CD4-positive, alpha-beta memory T cell (primary cell): ENCODE measurements at regions of chr15 and their contacts with region 1.

Region 1: DNA sequence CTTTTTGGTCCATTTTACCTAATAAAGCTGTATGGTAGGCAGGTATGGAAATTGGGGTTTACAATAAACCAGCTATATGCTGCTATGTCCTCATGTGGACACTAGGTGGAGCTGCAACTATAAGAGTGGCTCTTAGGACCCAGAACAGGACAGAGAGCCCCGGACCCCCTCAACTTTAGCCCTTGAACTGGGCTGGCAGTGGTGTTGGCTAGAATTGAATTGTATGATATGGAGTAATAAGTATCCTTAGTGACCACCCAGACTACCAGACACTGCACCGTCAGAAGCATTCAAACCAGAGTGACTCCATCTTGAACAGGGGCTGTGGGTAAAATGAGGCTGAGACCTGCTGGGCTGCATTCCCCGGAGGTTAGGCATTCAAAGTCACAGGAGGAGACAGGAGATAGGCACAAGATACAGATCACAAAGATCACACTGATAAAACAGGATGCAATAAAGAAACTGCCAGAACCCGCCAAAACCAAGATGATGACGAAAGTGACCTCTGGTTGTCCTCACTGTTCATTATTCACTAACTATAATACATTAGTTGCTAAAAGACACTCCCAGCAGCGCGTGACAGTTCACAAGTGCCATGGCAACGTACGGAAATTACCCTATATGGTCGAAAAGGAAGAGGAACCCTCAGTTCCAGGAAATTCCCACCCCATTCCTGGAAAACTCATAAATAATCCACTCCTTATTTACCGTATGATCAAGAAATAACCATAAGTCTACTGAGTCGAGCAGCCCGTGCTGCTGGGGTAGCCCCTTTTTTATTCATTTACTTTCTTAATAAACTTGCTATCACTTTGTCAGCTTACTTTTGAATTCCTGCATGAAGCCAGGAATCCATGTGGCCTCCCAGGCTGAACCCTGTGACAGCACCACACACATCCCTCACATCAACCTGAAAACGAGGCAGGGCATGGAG is 68.7 kb upstream of the BLM start:
- DNase-seq: peak; percentile 59 to 75 (median 67)
- H3K4me3 ChIP-seq: no peak overlapping the region
- H3K4me3 Mint-ChIP-seq: peak overlapping the region in 7 of 8 donors; percentile 53 to 80 (median 73)
- H3K27ac ChIP-seq: no peak overlapping the region
- H3K27ac Mint-ChIP-seq: peak overlapping the region; percentile 28 to 83 (median 75)
- H3K4me1 ChIP-seq: peaks cover 20% of the 10 kb centered on the region
- H3K4me1 Mint-ChIP-seq: peaks cover 14 to 27% (median 21%) of the 10 kb centered on the region in 4 donors
- H3K27me3 ChIP-seq: no peaks in the 10 kb centered on the region
- H3K27me3 Mint-ChIP-seq: peaks cover 0 to 3% of the 10 kb centered on the region in 2 donors

Region 2: GRCh38 chr15:90529371-90530249 is 118.8 kb before region 1 on chr15 and contains the start of gene CRTC3:
- CTCF ChIA-PET with region 1: no interaction called
- POLR2A ChIA-PET with region 1: no interaction called
- intact Hi-C with region 1: no loop called
- DNase-seq: peak; percentile 61 to 73 (median 65)
- H3K4me3 ChIP-seq: peak within 1 kb of the TSS; percentile 77 to 84
- H3K4me3 Mint-ChIP-seq: peak within 1 kb of the TSS; percentile 92 to 98 (median 94)
- H3K27ac ChIP-seq: peak within 1 kb of the TSS; percentile 64
- H3K27ac Mint-ChIP-seq: peak within 1 kb of the TSS; percentile 90 to 95 (median 94)
- H3K4me1 ChIP-seq: peaks cover 40% of the 10 kb centered on the region
- H3K4me1 Mint-ChIP-seq: peaks cover 29 to 49% (median 42%) of the 10 kb centered on the region in 4 donors
- H3K27me3 ChIP-seq: no peaks in the 10 kb centered on the region
- H3K27me3 Mint-ChIP-seq: no peaks in the 10 kb centered on the region
- total RNA-seq, gene CRTC3: 72.2 to 75.5 TPM

Region 3: DNA sequence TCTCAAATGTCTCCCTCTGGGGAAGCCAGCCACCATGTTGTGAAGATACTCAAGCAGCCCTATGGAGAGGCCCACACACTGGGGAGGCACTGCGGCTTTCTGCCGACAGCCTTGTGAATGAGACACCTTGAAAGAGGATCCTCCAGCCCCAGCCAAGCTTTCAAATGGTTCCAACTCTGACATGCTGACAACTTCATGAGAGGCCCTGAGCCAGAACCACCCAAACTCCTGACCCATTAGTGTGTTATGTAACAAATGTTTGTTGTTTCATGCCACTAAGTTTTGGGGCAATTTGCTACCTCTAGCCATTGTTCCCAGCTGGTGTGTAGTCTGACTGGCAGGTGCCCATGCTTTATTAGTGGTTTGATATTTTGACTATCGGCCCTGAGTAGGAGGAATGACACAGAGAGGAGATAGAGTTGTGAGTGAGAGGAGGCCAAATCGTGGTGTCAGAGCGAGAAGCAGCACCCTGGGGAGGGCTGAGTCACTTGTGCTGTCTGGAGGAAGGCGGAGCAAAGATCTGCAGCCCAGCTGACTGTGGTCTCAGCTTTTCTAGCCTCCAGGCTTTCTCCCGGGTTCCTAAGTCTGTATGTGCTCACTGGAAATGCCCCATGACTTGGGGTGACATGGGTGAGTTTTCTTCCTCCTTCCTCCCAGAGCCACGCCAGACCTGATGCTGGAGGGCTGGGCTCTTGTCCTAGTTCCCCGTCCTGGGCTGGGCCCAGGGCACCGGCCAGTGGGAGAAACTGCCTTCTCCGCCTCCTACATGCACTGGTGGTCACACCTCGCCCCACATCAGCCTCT is 12.0 kb after region 1 on chr15:
- CTCF ChIA-PET with region 1: interaction called, 16 read pairs
- POLR2A ChIA-PET with region 1: no interaction called
- intact Hi-C with region 1: no loop called
- DNase-seq: peak; percentile 28 to 75 (median 32)
- H3K4me3 ChIP-seq: peak overlapping the region in 1 of 2 donors; percentile 33
- H3K4me3 Mint-ChIP-seq: peak overlapping the region; percentile 47 to 90 (median 79)
- H3K27ac ChIP-seq: no peak overlapping the region
- H3K27ac Mint-ChIP-seq: peak overlapping the region in 4 of 7 donors; percentile 16 to 84 (median 41)
- H3K4me1 ChIP-seq: peaks cover 61% of the 10 kb centered on the region
- H3K4me1 Mint-ChIP-seq: peaks cover 52 to 75% (median 62%) of the 10 kb centered on the region in 4 donors
- H3K27me3 ChIP-seq: peaks cover 12% of the 10 kb centered on the region
- H3K27me3 Mint-ChIP-seq: peaks cover 26 to 37% of the 10 kb centered on the region in 2 donors

Region 4: DNA sequence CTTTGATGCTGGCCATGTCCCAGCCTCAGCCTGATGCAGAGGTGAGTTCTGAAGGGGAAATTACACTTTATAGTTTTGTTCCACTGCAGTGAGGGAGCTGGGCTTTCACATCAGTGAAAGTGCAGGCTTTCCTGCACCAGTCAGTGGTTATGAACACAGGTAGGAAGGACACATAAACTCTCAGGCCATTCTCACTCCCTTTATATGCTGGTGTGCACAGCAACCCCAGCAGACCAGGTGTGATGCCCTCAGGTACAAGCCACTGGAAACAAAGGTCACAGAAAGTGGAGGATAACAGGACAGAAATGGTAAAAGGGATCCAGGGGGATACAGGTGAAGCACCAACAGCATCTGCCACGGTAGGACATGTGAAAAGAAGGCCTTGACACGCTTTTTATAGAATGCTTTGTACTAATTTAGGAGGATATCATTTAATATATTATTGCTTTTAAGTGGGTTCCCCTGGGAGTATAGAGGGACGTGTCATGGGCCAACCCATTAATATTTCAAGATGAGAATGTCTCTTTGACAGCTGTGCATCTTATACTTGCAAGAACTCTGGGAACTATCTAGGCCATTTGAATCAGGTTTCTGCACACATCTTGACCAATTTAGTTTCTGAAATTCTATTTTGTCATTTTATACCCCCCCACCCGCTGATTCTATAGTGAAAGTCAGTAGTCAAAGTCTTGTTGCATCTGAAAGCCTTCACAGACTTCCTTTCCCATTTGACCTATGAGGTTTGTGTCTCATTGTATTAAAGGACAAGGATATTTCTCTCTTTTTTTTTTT is 43.8 kb after region 1 on chr15:
- CTCF ChIA-PET with region 1: interaction called, 70 read pairs
- POLR2A ChIA-PET with region 1: no interaction called
- intact Hi-C with region 1: loop called (anchors 1 kb)
- DNase-seq: no peak
- H3K4me3 ChIP-seq: no peak overlapping the region
- H3K4me3 Mint-ChIP-seq: no peak overlapping the region
- H3K27ac ChIP-seq: no peak overlapping the region
- H3K27ac Mint-ChIP-seq: no peak overlapping the region
- H3K4me1 ChIP-seq: no peaks in the 10 kb centered on the region
- H3K4me1 Mint-ChIP-seq: peaks cover 0 to 3% (median under 1%) of the 10 kb centered on the region in 4 donors
- H3K27me3 ChIP-seq: no peaks in the 10 kb centered on the region
- H3K27me3 Mint-ChIP-seq: no peaks in the 10 kb centered on the region

Region 5: DNA sequence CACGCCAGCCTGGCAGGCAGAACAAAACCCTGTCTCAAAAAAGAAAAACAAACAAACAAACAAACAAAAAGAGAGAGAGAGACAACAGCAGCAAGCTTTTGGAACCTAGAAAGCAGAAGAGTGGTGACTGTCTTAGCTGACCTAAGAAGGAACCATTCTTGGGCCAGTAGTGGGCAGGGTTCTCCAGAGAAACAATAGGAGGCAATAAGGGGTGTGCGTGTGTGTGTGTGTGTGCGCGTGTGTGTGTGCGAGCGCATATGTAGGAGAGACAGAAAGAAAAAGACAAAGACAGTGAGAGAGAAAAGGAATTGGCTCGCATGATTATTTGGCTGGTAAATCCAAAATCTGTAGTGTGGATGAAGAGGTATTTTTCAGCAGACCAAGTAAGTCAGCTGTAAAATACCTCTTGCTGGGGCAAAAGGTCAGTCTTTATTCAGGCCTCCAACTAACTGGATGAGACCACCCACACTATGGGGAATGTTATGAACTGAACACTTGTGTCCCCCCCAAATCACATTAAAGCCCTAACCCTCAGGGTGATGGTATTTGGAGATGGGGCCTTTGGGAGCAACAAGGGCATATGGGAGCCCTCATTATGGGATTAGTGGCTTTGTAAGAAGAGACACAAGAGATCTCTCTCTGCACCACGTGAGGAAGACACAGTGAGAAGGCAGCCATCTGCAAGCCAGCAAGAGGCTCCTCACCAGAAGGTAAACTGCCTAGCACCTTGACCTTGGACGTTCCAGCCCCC is 53.7 kb after region 1 on chr15:
- CTCF ChIA-PET with region 1: interaction called, 13 read pairs
- POLR2A ChIA-PET with region 1: no interaction called
- intact Hi-C with region 1: no loop called
- DNase-seq: no peak
- H3K4me3 ChIP-seq: no peak overlapping the region
- H3K4me3 Mint-ChIP-seq: no peak overlapping the region
- H3K27ac ChIP-seq: no peak overlapping the region
- H3K27ac Mint-ChIP-seq: peak overlapping the region in 1 of 7 donors; percentile 51
- H3K4me1 ChIP-seq: no peaks in the 10 kb centered on the region
- H3K4me1 Mint-ChIP-seq: no peaks in the 10 kb centered on the region
- H3K27me3 ChIP-seq: no peaks in the 10 kb centered on the region
- H3K27me3 Mint-ChIP-seq: no peaks in the 10 kb centered on the region